HepG2 (cell line): ENCODE measurements at regions of chr4 and their contacts with region 1.

Region 1: GRCh38 chr4:37802068-37802666 is 24.3 kb upstream of the PGM2 start:
- DNase-seq: peak; percentile 78
- ATAC-seq: peak; percentile 99
- H3K4me3 ChIP-seq: no peak overlapping the region
- H3K27ac ChIP-seq: no peak overlapping the region
- H3K4me1 ChIP-seq: peaks cover 10% of the 10 kb centered on the region; the same call in 1 of the 2 replicates
- H3K27me3 ChIP-seq: no peaks in the 10 kb centered on the region
- CTCF ChIP-seq: peak; percentile 91
- EP300 ChIP-seq: no peak
- POLR2A ChIP-seq: no peak
- RAD21 ChIP-seq: peak; percentile 85

Region 2: DNA sequence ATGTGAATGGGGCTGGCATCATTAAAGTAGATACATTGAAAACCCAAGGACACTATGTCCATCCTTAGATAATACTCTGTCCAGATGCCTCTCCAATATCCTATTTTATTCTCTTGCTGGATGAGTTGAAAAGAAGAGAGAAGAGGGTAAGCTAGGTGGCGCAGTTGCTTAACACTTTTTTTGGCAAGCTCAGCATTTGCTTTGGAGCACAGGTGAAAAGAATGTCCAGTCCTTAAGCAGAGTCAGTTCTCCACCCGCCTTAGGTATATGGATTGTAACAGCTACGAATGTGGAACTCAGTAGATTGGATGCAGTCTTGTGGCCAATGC is 349.3 kb before region 1 on chr4:
- CTCF ChIA-PET with region 1: interaction called, 10 read pairs
- POLR2A ChIA-PET with region 1: no interaction called
- in situ Hi-C with region 1: loop called (anchors 10 kb)
- intact Hi-C with region 1: loop called (anchors 2 kb)
- DNase-seq: peak; percentile 79
- ATAC-seq: peak; percentile 89
- H3K4me3 ChIP-seq: peak overlapping the region in 2 of 3 experiments; percentile 18 to 65; a peak in 1 of 6 replicates
- H3K27ac ChIP-seq: no peak overlapping the region
- H3K4me1 ChIP-seq: peaks cover 34% of the 10 kb centered on the region
- H3K27me3 ChIP-seq: peaks cover 0 to 26% of the 10 kb centered on the region in 2 experiments; a peak in 4 of 5 replicates
- CTCF ChIP-seq: peak; percentile 81
- EP300 ChIP-seq: no peak
- POLR2A ChIP-seq: no peak
- RAD21 ChIP-seq: no peak

Region 3: GRCh38 chr4:37686373-37687193 is 115.6 kb before region 1 on chr4 and contains the start of gene RELL1:
- CTCF ChIA-PET with region 1: interaction called, 5 read pairs
- POLR2A ChIA-PET with region 1: interaction called, 3 read pairs
- in situ Hi-C with region 1: no loop called
- intact Hi-C with region 1: loop called (anchors 1 kb)
- DNase-seq: peak; percentile 96
- ATAC-seq: peak; percentile 87
- H3K4me3 ChIP-seq: peak within 1 kb of the TSS; percentile 74 to 86 (median 81)
- H3K27ac ChIP-seq: peak within 1 kb of the TSS; percentile 90
- H3K4me1 ChIP-seq: peaks cover 42% of the 10 kb centered on the region
- H3K27me3 ChIP-seq: no peaks in the 10 kb centered on the region; a peak in 1 of 5 replicates
- CTCF ChIP-seq: peak; percentile 38
- EP300 ChIP-seq: peak in 1 of 2 experiments; percentile 15; a peak in 1 of 4 replicates
- POLR2A ChIP-seq: 0 out of 4 replicates have a peak, but pooled peaks of 1 of the 2 experiments have one; percentile 4
- RAD21 ChIP-seq: peak; percentile 16; the same call in 1 of the 2 replicates
- total RNA-seq, gene RELL1: 40.1 and 58.4 TPM in 2 replicates

Region 4: GRCh38 chr4:38034986-38035882 is 233.1 kb after region 1 on chr4:
- CTCF ChIA-PET with region 1: interaction called, 24 read pairs
- POLR2A ChIA-PET with region 1: no interaction called
- in situ Hi-C with region 1: loop called (anchors 5 kb)
- intact Hi-C with region 1: loop called (anchors 1 kb)
- DNase-seq: peak; percentile 66
- ATAC-seq: no peak
- H3K4me3 ChIP-seq: no peak overlapping the region
- H3K27ac ChIP-seq: no peak overlapping the region
- H3K4me1 ChIP-seq: peaks cover 21% of the 10 kb centered on the region
- H3K27me3 ChIP-seq: no peaks in the 10 kb centered on the region
- CTCF ChIP-seq: peak; percentile 59
- EP300 ChIP-seq: no peak
- POLR2A ChIP-seq: no peak
- RAD21 ChIP-seq: peak; percentile 54; the same call in 1 of the 2 replicates